Mammary epithelial cell (primary cell): ENCODE measurements at regions of chr4 and their contacts with region 1.

Region 1: DNA sequence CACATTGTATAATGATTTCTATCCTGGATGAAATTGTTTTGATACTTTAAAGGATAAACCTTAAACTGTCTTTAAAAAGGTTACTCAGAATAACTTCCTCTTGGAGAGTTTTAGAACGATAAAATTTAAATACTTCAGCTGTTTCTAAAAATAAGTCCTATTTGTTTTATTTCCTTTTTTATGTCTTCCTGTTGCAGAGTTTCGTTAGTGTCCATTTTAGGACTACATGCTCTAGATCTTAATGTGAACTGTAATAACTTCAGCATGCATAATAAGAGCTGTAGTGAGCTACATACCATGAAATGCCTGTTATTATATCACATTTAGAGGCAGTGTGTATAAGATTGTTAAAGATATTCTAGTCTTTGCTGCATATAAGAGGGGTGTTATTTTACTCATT is 14.6 kb downstream of the ATP10D start:
- DNase-seq: no peak
- H3K4me3 ChIP-seq: no peak overlapping the region
- H3K27ac ChIP-seq: no peak overlapping the region
- H3K4me1 ChIP-seq: no peaks in the 10 kb centered on the region
- H3K27me3 ChIP-seq: no peaks in the 10 kb centered on the region
- CTCF ChIP-seq: no peak

Region 2: GRCh38 chr4:47551682-47552081 is 52.0 kb after region 1 on chr4:
- CTCF ChIA-PET with region 1: no interaction called
- dilution Hi-C with region 1: loop called (anchors 5 kb)
- in situ Hi-C with region 1: no loop called
- intact Hi-C with region 1: no loop called
- DNase-seq: peak; percentile 51
- H3K4me3 ChIP-seq: no peak overlapping the region
- H3K27ac ChIP-seq: peak overlapping the region; percentile 21
- H3K4me1 ChIP-seq: peaks cover 35% of the 10 kb centered on the region
- H3K27me3 ChIP-seq: no peaks in the 10 kb centered on the region
- CTCF ChIP-seq: no peak

Region 3: GRCh38 chr4:47882228-47882627 is 382.5 kb after region 1 on chr4:
- CTCF ChIA-PET with region 1: no interaction called
- dilution Hi-C with region 1: no loop called
- in situ Hi-C with region 1: no loop called
- intact Hi-C with region 1: no loop called
- DNase-seq: no peak
- H3K4me3 ChIP-seq: no peak overlapping the region
- H3K27ac ChIP-seq: no peak overlapping the region
- H3K4me1 ChIP-seq: no peaks in the 10 kb centered on the region
- H3K27me3 ChIP-seq: no peaks in the 10 kb centered on the region
- CTCF ChIP-seq: no peak